Aorta (tissue), 5 donors: ENCODE measurements at regions of chr1 and their contacts with region 1.

Region 1: DNA sequence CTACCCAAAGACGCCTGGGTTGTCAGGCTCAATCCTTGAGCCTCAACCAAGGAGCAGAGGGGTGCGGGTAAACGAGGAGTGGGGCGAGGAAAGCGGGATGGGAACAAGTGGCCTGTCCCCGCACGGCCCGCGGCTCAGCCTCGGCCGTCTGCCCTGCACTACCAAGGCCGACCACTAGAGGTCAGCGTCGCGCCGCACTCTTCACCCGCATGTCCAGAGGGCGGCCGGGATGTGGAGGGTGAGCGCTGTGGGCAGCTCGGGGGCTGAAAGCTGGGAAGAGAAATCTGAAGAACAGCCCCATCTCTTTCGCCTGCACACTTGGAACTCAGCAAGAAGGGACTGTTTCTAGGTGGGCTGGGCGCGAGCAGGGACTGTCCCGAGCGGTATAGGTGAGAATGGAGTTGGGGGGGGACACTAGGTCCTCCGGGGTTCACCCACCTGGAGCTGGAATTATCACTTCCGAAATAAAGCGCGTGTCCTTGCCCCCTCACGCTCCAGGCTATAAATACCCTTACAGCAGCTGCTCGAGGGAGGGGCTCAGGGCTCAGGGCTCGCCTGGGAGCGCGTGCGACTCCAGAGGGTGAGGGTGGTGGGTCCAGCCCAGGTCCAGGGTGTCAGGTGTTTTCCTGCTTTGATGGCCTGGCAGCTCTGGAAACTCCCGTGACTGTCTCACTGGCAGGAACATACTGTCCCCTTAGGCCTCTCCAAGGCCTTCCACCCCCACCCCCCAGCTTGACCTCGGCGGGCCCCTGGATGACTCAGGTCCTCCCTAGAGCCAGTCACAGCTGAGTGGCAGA is 9.8 kb downstream of the SLC30A2 start:
- DNase-seq: peak; percentile 85 to 95
- ATAC-seq: peak; percentile 97
- H3K4me3 ChIP-seq: peak overlapping the region; percentile 38 to 71
- H3K27ac ChIP-seq: no peak overlapping the region
- H3K4me1 ChIP-seq: no peaks in the 10 kb centered on the region
- H3K27me3 ChIP-seq: no peaks in the 10 kb centered on the region

Region 2: DNA sequence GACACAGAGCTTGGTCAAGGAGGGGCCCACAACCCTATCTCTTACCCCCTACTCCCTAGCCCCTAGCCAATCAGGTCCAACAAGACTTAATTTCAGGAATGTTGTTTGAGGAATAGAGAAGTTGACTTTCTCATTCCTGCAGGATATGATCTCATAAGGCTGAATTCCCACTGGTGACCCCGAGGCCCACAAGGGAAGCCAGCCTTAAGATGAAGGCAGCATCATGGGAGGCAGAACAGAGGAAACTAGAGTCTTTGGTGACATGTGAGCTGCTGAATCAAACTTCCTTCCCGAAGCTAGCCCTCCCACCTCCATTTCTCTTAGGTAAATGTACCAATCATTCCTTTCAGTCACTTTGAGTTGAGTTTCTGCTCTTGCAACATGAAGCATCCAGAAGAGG is 66.4 kb after region 1 on chr1:
- intact Hi-C with region 1: loop called in 1 of 2 experiments (anchors 5 kb)
- DNase-seq: no peak
- ATAC-seq: no peak
- H3K4me3 ChIP-seq: no peak overlapping the region
- H3K27ac ChIP-seq: no peak overlapping the region
- H3K4me1 ChIP-seq: no peaks in the 10 kb centered on the region
- H3K27me3 ChIP-seq: no peaks in the 10 kb centered on the region

Region 3: GRCh38 chr1:26145041-26145959 is 109.1 kb after region 1 on chr1:
- intact Hi-C with region 1: loop called (anchors 5 kb)
- DNase-seq: peak; percentile 86 to 88
- ATAC-seq: peak; percentile 80
- H3K4me3 ChIP-seq: no peak overlapping the region
- H3K27ac ChIP-seq: no peak overlapping the region
- H3K4me1 ChIP-seq: no peaks in the 10 kb centered on the region
- H3K27me3 ChIP-seq: no peaks in the 10 kb centered on the region

Region 4: DNA sequence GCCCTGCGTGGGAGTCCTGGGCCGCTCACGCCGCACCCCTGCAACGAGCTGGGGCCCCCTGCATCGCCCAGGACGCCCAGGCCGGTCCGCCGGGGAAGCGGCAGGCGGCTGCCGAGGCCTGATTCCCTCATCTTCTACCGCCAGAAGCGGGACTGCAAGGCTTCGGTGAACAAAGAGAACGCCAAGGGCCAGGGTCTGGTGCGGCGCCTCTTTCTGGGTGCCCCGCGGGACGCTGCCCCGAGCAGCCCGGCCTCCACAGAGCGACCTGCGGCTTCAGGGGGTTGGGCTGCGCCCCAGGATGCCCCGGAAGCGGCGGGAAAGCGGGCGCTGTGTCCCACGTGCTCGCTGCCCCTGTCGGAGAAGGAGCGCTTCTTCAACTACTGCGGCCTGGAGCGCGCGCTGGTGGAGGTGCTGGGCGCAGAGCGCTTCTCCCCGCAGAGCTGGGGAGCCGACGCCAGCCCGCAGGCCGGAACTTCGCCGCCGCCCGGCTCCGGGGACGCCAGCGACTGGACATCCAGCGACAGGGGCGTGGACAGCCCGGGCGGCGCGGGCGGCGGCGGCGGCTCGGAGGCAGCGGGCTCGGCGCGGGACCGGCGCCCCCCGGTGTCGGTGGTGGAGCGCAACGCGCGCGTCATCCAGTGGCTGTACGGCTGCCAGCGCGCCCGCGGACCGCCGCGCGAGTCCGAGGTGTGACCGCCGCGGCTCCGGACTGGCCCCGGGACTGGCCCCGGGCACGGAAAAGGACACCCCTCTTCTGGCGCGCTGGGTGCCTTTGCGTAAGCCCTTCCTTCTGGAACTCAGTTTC is 125.5 kb after region 1 on chr1:
- intact Hi-C with region 1: loop called in 1 of 2 experiments (anchors 5 kb)
- DNase-seq: peak; percentile 65 to 89
- ATAC-seq: peak; percentile 61
- H3K4me3 ChIP-seq: peak overlapping the region; percentile 46 to 49
- H3K27ac ChIP-seq: no peak overlapping the region
- H3K4me1 ChIP-seq: no peaks in the 10 kb centered on the region
- H3K27me3 ChIP-seq: no peaks in the 10 kb centered on the region